ENCODE measurements at regions of chr1 and their contacts with region 1.

Region 1: DNA sequence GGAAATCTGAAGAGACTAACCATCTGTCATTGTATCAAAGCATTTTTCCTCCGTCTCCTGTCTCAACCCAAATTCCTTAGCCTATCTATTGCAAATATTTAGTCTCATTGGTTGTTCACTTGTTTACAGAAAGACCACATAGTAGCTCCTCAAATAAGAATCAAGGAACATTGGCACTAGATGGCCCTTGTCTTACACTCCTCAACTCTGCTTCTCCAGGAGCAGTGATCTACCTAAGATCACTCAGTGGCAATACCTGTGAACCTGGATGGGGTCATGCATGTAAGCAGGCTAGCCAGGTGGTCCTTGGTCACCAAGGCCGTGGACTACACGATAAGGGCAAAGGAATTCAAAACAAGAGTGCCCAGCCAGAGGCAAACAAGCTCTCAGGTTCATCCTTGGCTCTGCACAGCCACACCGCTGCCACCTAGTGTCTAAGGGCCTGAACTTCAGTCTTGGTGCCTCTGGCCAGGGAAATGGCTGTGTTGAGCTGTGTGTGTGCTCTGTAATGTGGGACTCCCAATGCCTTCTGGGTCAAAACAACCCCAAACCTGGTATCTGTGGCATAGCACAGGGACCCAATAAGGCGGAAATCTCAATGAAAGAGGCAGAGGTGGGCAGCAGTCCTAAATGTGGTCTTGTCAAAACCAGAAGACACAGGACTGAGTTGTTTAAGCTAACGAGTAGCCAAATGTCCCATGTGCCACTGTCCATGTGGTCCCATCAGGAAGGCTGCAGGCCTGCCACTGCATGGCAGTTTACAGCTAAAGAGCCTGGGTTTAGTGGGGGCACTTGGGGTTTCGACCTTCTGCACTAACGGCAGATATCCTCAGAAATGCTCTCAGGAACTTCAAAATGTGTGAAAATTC is 54.5 kb downstream of the GPR161 start:
- DNase-seq: peak; percentile 81
- ATAC-seq: peak; percentile 96
- H3K4me3 Mint-ChIP-seq: no peak overlapping the region
- H3K27ac Mint-ChIP-seq: no peak overlapping the region
- H3K4me1 Mint-ChIP-seq: no peaks in the 10 kb centered on the region
- H3K27me3 Mint-ChIP-seq: peaks cover 2% of the 10 kb centered on the region
- CTCF ChIP-seq: peak; percentile 74

Region 2: DNA sequence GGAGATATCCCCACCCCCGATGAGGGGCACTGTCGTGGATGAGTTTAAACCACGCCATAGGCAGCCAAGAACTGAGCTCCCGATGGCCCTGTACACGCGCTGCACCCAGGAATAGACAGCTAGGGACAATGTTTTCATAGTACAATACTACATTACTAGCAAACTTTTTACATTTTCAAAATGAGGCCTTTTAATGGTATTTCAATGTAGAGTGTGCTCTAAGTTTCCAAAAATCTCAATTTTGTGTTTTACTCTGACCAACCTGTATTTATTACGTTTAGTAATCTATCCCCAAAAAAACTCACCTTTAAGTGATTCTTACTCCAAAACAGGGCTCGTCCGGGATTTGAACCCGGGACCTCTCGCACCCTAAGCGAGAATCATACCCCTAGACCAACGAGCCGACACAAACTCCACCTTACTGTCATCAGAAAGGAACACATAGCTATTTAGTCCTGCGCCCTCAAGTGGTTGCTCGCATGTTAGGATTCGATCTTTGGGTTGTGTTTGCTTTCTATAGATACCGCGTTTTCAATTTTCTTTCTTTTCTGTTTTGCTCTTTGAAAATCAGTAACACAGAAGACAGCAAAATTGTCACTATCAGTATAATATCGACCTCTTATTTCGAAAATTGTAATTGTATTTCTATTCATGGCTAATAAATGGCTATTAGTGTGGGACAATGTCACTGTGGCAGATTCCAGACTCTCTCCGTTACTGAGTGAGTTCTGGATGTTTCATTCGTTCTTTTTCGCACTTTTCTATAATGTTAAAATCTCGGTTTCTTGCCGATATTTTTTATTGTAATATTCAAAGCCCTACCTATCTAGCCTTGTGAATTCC is 366.9 kb before region 1 on chr1:
- CTCF ChIA-PET with region 1: interaction called, 7 read pairs
- POLR2A ChIA-PET with region 1: no interaction called
- intact Hi-C with region 1: loop called (anchors 10 kb)
- DNase-seq: peak; percentile 95
- ATAC-seq: peak; percentile 58
- H3K4me3 Mint-ChIP-seq: peak overlapping the region; percentile 90
- H3K27ac Mint-ChIP-seq: peak overlapping the region; percentile 95
- H3K4me1 Mint-ChIP-seq: peaks cover 28% of the 10 kb centered on the region
- H3K27me3 Mint-ChIP-seq: peaks cover 6% of the 10 kb centered on the region
- CTCF ChIP-seq: peak; percentile 87

Region 3: GRCh38 chr1:167936068-167936929 is 145.9 kb before region 1 on chr1 and contains the start of gene DCAF6:
- CTCF ChIA-PET with region 1: interaction called, 10 read pairs
- POLR2A ChIA-PET with region 1: interaction called, 3 read pairs
- intact Hi-C with region 1: loop called (anchors 5 kb)
- DNase-seq: peak; percentile 96
- ATAC-seq: peak; percentile 83
- H3K4me3 Mint-ChIP-seq: peak within 1 kb of the TSS; percentile 90
- H3K27ac Mint-ChIP-seq: peak within 1 kb of the TSS; percentile 100
- H3K4me1 Mint-ChIP-seq: peaks cover 28% of the 10 kb centered on the region
- H3K27me3 Mint-ChIP-seq: no peaks in the 10 kb centered on the region
- CTCF ChIP-seq: no peak
- total RNA-seq, gene DCAF6: 21.6 to 22.6 TPM

Region 4: DNA sequence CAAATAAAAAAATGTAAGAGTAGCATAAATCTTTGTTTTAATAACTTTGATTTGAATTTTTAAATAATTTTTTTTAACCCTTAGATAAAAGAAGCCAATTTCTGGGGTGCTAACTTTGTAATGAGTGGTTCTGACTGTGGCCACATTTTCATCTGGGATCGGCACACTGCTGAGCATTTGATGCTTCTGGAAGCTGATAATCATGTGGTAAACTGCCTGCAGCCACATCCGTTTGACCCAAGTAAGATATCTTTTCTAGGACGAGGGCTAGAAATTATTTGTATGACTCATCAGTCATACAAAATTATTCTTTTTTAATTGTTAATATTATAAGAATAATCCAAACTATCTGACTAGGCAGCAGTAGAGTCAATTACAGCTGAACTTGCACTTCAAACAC is 16.7 kb before region 1 on chr1:
- CTCF ChIA-PET with region 1: interaction called, 105 read pairs
- POLR2A ChIA-PET with region 1: interaction called, 4 read pairs
- intact Hi-C with region 1: no loop called
- DNase-seq: no peak
- ATAC-seq: no peak
- H3K4me3 Mint-ChIP-seq: no peak overlapping the region
- H3K27ac Mint-ChIP-seq: no peak overlapping the region
- H3K4me1 Mint-ChIP-seq: no peaks in the 10 kb centered on the region
- H3K27me3 Mint-ChIP-seq: no peaks in the 10 kb centered on the region
- CTCF ChIP-seq: no peak

Region 5: GRCh38 chr1:168098561-168099320 is 16.5 kb after region 1 on chr1:
- CTCF ChIA-PET with region 1: interaction called, 52 read pairs
- POLR2A ChIA-PET with region 1: no interaction called
- intact Hi-C with region 1: no loop called
- DNase-seq: no peak
- ATAC-seq: no peak
- H3K4me3 Mint-ChIP-seq: no peak overlapping the region
- H3K27ac Mint-ChIP-seq: no peak overlapping the region
- H3K4me1 Mint-ChIP-seq: no peaks in the 10 kb centered on the region
- H3K27me3 Mint-ChIP-seq: no peaks in the 10 kb centered on the region
- CTCF ChIP-seq: no peak